ENCODE measurements at regions of chr2 and their contacts with region 1.

Region 1: DNA sequence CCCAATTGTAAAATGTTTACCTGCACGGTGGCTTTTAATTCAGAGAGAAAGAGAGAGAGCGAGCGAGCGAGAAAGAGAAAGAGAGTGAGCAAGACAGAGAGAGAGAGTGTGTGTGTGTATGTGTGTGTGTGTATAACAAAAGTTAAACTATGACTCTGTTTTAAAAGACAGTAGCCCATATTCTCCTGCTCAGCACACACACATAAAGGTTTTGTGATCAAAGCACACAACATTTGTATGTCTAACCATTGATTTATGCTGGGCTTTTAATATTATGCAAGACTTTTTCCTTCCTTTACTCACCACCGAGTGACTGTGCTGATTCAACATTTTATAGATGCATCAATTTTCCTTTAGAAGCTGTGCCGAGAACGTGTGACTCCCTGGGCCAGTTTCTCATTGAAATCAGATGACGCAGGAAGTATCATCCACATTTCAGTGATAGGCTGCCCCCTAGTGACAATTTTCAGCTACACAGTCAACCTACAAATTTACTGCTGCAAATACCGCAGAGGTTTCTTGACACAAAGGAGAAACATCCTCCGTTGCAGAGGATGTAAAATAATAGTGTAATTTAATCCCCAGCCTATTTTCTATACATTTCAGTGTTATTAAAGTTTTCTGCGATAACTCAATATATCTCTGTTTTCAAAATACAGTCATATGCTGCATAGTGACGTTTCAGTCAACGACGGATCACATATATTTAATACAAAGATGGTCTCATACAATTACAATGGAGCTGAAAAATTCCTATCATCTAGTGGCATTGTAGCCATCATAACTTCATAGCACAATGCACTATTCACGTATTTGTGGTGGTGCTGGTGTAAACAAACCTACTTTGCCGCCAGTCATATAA is 165.9 kb upstream of the TANK start:
- DNase-seq: peak in 6 of 10 donors; percentile 37 to 67 (median 57)

Region 2: GRCh38 chr2:160109936-160110673 is 884.3 kb before region 1 on chr2:
- intact Hi-C with region 1: loop called (anchors 5 kb)
- DNase-seq: peak in 6 of 10 donors; percentile 35 to 93 (median 43)

Region 3: DNA sequence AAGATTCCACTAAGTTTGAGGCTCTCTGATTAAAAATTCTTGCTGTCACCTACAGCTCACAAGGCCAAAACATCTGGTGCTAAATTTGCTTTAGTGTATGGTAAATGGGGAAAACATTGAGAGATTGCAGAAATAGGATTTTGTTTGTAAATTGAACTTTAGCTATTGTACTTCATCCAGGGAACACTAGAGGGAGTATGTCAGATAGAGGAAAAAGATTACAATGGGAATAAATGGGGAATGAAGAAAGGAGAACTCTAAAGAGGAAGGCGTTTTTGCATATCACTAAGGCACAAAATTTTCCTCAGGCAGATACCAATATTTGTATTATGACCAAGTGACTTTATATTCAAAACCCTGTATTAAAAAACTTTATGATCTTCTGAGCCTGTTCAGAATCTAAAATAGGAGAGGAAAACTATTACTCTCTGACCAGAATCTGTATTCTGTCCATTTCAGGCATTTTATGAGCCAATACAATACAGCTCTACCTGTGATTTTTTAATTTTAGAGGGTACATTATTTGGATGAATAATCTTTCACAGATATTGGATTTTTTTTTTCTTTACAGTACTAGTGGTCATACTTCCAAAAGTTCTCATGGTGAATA is 742.0 kb before region 1 on chr2:
- intact Hi-C with region 1: loop called (anchors 5 kb)
- DNase-seq: no peak

Region 4: GRCh38 chr2:160566717-160567116 is 427.7 kb before region 1 on chr2:
- intact Hi-C with region 1: no loop called
- DNase-seq: no peak